Transverse colon (tissue), 4 donors: ENCODE measurements at regions of chr5 and their contacts with region 1.

Region 1: DNA sequence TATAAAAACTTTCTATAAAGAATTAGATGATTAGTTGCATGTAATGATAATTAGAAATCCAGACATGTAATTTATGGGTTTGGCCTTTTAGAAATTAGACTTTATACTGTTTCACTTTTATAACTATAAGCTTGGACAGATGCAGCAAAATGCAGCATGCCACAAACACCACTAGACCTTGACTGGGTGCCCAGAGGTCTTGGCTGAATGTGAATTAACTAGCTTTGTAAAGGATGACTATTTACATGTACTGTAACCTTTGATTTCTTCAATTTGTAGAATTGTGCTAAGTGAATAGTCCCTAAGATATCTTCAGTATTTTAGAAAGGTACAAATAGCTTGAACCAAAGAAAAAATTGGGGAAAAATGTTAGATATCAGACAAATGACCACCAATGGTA is 2168.1 kb downstream of the MAT2B start:
- DNase-seq: no peak
- H3K4me3 ChIP-seq: no peak overlapping the region
- H3K27ac ChIP-seq: no peak overlapping the region
- H3K4me1 ChIP-seq: no peaks in the 10 kb centered on the region
- H3K27me3 ChIP-seq: no peaks in the 10 kb centered on the region
- CTCF ChIP-seq: no peak
- EP300 ChIP-seq: no peak
- POLR2A ChIP-seq: no peak

Region 2: GRCh38 chr5:164876793-164877192 is 796.7 kb before region 1 on chr5:
- in situ Hi-C with region 1: no loop called
- intact Hi-C with region 1: no loop called
- DNase-seq: no peak
- H3K4me3 ChIP-seq: no peak overlapping the region
- H3K27ac ChIP-seq: no peak overlapping the region
- H3K4me1 ChIP-seq: no peaks in the 10 kb centered on the region
- H3K27me3 ChIP-seq: no peaks in the 10 kb centered on the region
- CTCF ChIP-seq: no peak
- EP300 ChIP-seq: no peak
- POLR2A ChIP-seq: no peak

Region 3: GRCh38 chr5:166354277-166354820 is 680.9 kb after region 1 on chr5:
- in situ Hi-C with region 1: no loop called
- intact Hi-C with region 1: loop called (anchors 10 kb)
- DNase-seq: no peak
- H3K4me3 ChIP-seq: no peak overlapping the region
- H3K27ac ChIP-seq: no peak overlapping the region
- H3K4me1 ChIP-seq: no peaks in the 10 kb centered on the region
- H3K27me3 ChIP-seq: no peaks in the 10 kb centered on the region
- CTCF ChIP-seq: no peak
- EP300 ChIP-seq: no peak
- POLR2A ChIP-seq: no peak